ENCODE measurements at regions of chr16 and their contacts with region 1.

Region 1: DNA sequence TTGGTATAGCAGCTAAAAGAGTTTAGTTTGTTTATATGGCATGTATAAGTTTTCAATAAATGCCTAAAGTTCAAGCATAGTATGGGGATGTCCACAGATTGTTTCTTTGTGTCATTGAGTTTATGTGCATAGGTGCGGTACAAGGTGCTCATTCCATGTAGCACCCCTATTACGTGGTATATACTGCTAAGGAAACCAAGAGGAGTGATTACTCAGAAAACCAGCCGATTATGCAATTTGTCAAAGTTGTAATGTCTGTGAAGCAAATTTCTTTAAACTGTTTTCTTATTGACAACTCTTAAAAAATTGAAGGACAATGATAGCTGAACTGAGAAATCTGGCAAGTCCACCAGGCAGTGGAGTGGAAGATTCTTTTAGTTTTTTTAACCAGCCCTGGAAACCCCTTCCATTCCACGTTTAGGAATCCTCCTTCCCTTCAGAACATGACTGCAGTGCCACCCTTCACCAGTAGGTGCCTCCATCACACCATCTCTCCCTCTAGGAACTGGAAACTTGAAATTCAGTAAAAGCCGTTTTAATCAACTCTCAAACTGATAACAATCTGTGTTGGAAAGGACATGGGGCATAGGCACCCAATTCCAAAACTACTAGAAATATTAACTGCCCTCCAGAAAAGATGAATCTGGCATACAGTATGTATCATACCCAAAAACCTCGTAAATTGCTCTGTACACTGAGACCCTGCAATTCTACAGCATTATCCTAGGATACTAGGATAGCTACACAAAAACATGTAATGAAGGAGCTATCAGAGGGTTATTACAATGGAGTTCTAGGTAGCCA is 43.5 kb downstream of the REXO5 start:
- DNase-seq: no peak
- H3K4me3 ChIP-seq: no peak overlapping the region
- H3K27me3 ChIP-seq: no peaks in the 10 kb centered on the region
- CTCF ChIP-seq: peak; percentile 97

Region 2: DNA sequence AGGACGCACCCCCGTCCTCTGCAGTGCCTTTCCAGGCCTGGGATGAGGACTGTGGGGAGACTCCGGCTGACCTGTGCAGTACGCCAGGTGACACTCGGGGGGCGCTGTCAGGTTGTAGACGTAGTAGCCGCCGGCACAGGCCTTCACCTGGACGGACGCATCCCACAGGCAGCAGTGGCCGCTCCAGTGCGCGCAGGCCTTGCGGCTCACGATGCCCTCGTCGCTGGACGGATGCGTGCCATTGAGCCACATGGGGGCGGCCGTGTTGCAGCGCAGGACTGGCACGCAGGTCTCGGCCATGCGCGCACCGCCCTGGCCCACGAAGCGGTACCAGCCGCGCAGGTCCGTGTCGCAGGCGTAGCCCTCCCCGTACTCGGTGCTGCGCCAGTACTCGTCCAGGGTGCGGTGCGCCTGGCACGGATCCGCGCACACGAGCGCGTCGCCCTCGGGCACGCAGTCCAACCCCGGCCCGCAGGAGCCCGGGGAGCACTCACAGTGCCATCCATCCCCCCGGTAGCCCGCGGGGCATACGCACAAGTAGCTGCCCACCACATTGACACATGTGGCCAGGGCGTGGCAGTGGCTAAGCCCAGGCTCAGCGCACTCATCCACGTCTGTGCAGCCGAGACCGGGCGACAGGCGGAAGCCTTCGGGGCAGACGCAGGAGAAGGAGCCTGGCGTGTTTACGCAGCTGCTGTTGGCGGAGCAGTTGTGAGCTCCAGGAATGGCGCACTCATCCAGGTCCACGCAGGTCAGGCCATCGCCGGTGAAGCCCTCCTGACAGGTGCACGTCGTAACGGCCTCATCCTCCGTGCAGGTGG is 501.2 kb before region 1 on chr16:
- CTCF ChIA-PET with region 1: no interaction called
- POLR2A ChIA-PET with region 1: no interaction called
- DNase-seq: no peak
- H3K4me3 ChIP-seq: no peak overlapping the region
- H3K27me3 ChIP-seq: no peaks in the 10 kb centered on the region
- CTCF ChIP-seq: no peak

Region 3: GRCh38 chr16:20707461-20707860 is 142.3 kb before region 1 on chr16:
- CTCF ChIA-PET with region 1: no interaction called
- POLR2A ChIA-PET with region 1: no interaction called
- DNase-seq: no peak
- H3K4me3 ChIP-seq: no peak overlapping the region
- H3K27me3 ChIP-seq: no peaks in the 10 kb centered on the region
- CTCF ChIP-seq: no peak

Region 4: GRCh38 chr16:20866145-20866772 is 16.5 kb after region 1 on chr16:
- CTCF ChIA-PET with region 1: interaction called, 21 read pairs
- POLR2A ChIA-PET with region 1: no interaction called
- DNase-seq: peak; percentile 29
- H3K4me3 ChIP-seq: no peak overlapping the region
- H3K27me3 ChIP-seq: no peaks in the 10 kb centered on the region
- CTCF ChIP-seq: no peak

Region 5: GRCh38 chr16:20899477-20900298 is 49.9 kb after region 1 on chr16:
- CTCF ChIA-PET with region 1: interaction called, 11 read pairs
- POLR2A ChIA-PET with region 1: interaction called, 9 read pairs
- DNase-seq: no peak
- H3K4me3 ChIP-seq: peak overlapping the region; percentile 86
- H3K27me3 ChIP-seq: no peaks in the 10 kb centered on the region
- CTCF ChIP-seq: no peak

Region 6: GRCh38 chr16:20910781-20911321 is 61.1 kb after region 1 on chr16:
- CTCF ChIA-PET with region 1: interaction called, 13 read pairs
- POLR2A ChIA-PET with region 1: interaction called, 13 read pairs
- DNase-seq: peak; percentile 98
- H3K4me3 ChIP-seq: no peak overlapping the region
- H3K27me3 ChIP-seq: no peaks in the 10 kb centered on the region
- CTCF ChIP-seq: no peak

Region 7: DNA sequence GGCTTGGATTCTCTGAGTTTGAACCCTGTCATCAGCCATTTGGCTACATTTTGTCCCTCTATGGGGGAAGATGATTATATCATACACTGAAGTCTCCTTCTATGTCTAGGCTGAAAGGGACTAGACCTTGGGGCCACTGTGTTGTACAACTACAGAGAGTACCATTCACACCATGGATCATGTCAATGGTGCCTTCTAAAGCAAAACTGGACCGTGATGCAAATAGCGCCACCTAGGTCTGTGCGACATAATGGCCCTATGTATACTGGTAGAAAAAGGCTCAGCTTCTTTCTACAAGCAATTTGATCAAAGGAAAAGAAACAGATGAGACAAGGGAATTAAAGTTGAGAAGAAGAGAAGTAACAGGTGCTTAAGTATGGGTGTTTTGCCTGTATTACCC is 151.5 kb after region 1 on chr16:
- CTCF ChIA-PET with region 1: interaction called, 15 read pairs
- POLR2A ChIA-PET with region 1: no interaction called
- DNase-seq: no peak
- H3K4me3 ChIP-seq: no peak overlapping the region
- H3K27me3 ChIP-seq: no peaks in the 10 kb centered on the region; the same call in 1 of the 2 replicates
- CTCF ChIP-seq: peak; percentile 39

Region 8: DNA sequence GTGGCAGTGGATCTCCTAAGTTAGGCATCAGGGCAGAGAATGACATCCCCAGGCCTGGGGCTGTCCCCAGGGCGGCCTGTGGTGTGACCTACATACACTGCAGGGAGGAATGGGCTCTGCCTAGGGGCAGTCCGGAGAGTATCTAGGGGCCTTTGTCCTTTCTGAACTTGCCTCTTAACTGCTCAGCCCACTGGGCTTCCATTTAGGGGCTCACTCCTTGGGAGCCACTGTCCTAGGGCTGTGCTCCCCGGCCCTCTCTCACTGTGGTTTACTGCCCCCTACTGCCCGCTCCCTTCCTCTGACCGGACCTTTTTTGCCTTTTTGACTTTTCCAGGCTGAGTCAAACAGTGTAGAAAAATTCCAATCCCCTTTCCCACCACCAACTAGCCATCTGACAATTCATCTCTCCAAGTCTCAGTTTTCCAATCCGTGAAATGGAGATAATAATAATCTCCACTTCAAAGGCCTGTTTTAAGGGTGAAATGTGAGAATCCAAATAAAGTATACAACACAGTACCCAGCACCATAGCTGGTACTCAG is 234.0 kb after region 1 on chr16:
- CTCF ChIA-PET with region 1: interaction called, 74 read pairs
- POLR2A ChIA-PET with region 1: no interaction called
- DNase-seq: no peak
- H3K4me3 ChIP-seq: no peak overlapping the region
- H3K27me3 ChIP-seq: no peaks in the 10 kb centered on the region; the same call in 1 of the 2 replicates
- CTCF ChIP-seq: peak; percentile 72

Region 9: GRCh38 chr16:21101631-21102420 is 252.0 kb after region 1 on chr16:
- CTCF ChIA-PET with region 1: interaction called, 25 read pairs
- POLR2A ChIA-PET with region 1: no interaction called
- DNase-seq: no peak
- H3K4me3 ChIP-seq: no peak overlapping the region
- H3K27me3 ChIP-seq: no peaks in the 10 kb centered on the region
- CTCF ChIP-seq: peak; percentile 51

Region 10: GRCh38 chr16:21222495-21223337 is 372.9 kb after region 1 on chr16:
- CTCF ChIA-PET with region 1: no interaction called
- POLR2A ChIA-PET with region 1: no interaction called
- DNase-seq: no peak
- H3K4me3 ChIP-seq: no peak overlapping the region
- H3K27me3 ChIP-seq: no peaks in the 10 kb centered on the region; the same call in 1 of the 2 replicates
- CTCF ChIP-seq: no peak

Measured in BJ (cell line).